Activated T-helper 2 cell treated with anti-CD3 and anti-CD28 coated beads, Interferon-gamma antibody, Interleukin-2, Interleukin-4, amounts not matched to agents 10 μg/mL and 5 μg/mL and 100 μg/mL, durations not matched to agents 14 hours and 24 hours and 36 hours (primary cell): ENCODE measurements at regions of chr14 and their contacts with region 1.

Region 1: DNA sequence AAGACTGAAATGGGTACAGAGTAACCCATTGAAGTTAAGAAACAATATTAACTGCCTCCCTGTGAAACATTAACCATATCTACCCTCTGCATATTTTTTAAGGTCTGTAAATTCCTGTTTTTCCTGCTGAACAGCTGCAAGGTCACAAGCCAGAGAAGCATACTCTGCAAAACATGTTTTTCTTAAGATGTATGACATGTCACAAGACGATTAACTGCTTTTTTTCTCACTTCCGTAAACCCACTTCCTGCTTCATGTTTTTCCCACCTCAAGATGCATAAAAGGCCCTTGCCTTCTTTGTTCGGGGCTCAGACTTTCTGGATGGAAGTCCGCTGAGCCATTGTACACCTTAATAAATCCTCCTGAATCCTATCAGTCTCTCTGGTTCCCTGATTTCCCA is 504.7 kb upstream of the MIS18BP1 start:
- DNase-seq: no peak
- H3K4me3 Mint-ChIP-seq: no peak overlapping the region
- H3K27ac Mint-ChIP-seq: no peak overlapping the region
- H3K4me1 Mint-ChIP-seq: no peaks in the 10 kb centered on the region
- H3K27me3 Mint-ChIP-seq: no peaks in the 10 kb centered on the region

Region 2: DNA sequence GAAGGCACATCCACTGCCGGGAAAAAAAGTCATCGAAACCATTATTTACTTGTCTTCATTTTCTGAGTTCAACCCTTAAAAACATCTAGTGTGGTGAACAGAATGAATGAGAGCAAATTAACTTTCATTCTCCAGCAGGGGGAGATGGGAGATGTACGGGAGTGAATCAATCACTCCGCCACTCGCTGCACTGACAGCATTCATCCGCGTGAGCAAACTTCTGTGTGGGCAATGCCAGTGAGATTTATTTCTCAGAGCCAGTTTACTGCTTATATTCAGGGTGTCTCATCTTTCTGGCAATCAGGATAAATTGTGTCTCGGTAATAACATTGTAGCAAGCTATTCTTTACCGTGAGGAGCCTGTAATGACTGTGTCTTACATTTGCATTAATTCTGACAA is 41.1 kb before region 1 on chr14:
- intact Hi-C with region 1: loop called (anchors 2 kb)
- DNase-seq: no peak
- H3K4me3 Mint-ChIP-seq: no peak overlapping the region
- H3K27ac Mint-ChIP-seq: no peak overlapping the region
- H3K4me1 Mint-ChIP-seq: no peaks in the 10 kb centered on the region
- H3K27me3 Mint-ChIP-seq: no peaks in the 10 kb centered on the region